HEK293T (cell line): ENCODE measurements at regions of chr11 and their contacts with region 1.

Region 1: GRCh38 chr11:65225279-65226102 is 36.3 kb upstream of the POLA2 start:
- DNase-seq: peak; percentile 53

Region 2: GRCh38 chr11:65251476-65251875 is 26.0 kb after region 1 on chr11:
- CTCF ChIA-PET with region 1: interaction called, 11 read pairs
- POLR2A ChIA-PET with region 1: no interaction called
- DNase-seq: no peak

Region 3: DNA sequence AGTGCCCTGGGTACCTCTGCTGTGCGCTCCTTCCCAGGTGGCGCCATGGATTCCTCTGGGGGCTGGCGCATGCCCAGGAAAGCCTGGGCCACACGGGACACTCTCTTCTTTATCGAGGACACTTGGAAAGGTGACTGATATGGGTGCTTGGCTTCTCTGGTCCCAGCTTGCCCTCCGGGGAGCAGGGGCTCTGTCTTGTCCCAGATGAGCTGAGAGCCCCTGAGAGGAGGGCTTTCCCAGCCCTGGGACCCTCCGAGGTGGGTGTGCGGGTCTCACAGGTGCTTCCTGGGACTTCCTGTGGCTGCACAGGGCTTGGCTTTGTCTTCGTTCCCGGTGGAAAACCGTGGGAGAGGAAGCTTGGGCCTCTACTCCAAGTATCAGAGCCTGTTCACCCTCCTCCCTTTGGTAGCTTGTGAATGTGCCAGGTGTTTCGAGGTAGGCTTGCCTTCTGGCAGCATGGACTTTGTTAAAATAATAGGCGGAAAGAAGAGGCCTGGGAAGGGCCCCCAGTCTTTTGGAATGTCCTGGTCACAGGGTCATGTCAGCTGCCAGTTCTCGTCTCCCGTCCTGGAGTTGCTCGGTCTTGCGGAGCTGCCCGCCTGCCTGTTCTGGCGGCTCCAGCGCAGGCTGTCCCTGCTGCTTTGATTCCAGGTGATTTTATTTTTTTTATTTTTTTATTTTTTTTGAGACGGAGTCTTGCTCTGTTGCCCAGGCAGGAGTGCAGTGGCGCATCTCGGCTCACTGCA is 187.0 kb after region 1 on chr11:
- CTCF ChIA-PET with region 1: no interaction called
- POLR2A ChIA-PET with region 1: no interaction called
- DNase-seq: no peak